Activated CD4-positive, alpha-beta T cell treated with anti-CD3 and anti-CD28 coated beads for 36 hours (primary cell): ENCODE measurements at regions of chr16 and their contacts with region 1.

Region 1: GRCh38 chr16:89700100-89700648 is 1.3 kb downstream of the SPATA2L start:
- DNase-seq: peak; percentile 99
- ATAC-seq: peak; percentile 21
- H3K4me3 Mint-ChIP-seq: peak overlapping the region; percentile 71
- H3K27ac Mint-ChIP-seq: peak overlapping the region; percentile 25
- H3K4me1 Mint-ChIP-seq: peaks cover 13% of the 10 kb centered on the region
- H3K27me3 Mint-ChIP-seq: no peaks in the 10 kb centered on the region

Region 2: DNA sequence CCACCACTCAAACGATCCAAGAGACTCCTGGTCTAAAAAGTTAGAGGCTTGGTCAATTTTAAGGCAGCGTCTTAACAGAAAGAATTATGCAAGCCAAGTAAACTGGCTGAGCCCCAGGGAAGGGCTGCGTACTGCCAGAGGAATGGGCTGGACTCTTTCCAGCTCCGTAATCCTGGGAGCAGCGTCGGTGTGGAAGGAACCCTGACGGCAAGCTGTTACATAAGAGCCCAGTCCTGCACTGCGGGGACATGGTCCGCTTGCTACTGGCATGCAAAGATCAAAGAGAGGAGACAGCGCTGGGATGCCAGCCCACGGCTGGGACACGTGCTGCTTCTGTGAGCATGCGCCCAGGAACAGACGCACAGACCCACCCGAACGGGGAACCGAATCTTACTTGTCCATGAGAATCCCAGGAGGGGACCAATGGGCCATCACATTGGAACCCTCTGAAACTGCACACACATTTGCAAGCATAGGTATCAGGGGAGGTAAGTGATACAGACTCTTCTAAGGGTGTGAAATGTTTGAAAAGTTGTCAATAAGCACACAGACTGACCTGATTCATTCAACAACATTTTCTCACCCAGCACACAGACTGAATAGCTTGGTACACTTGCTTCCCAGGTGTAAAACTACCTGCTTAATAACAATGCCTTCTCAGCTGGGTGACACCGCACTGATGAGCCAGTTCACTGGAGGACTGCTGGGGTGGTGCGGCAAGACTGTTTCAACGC is 304.9 kb before region 1 on chr16:
- CTCF ChIA-PET with region 1: no interaction called
- POLR2A ChIA-PET with region 1: no interaction called
- intact Hi-C with region 1: no loop called
- DNase-seq: no peak
- ATAC-seq: no peak
- H3K4me3 Mint-ChIP-seq: no peak overlapping the region
- H3K27ac Mint-ChIP-seq: no peak overlapping the region
- H3K4me1 Mint-ChIP-seq: peaks cover 57% of the 10 kb centered on the region
- H3K27me3 Mint-ChIP-seq: no peaks in the 10 kb centered on the region

Region 3: DNA sequence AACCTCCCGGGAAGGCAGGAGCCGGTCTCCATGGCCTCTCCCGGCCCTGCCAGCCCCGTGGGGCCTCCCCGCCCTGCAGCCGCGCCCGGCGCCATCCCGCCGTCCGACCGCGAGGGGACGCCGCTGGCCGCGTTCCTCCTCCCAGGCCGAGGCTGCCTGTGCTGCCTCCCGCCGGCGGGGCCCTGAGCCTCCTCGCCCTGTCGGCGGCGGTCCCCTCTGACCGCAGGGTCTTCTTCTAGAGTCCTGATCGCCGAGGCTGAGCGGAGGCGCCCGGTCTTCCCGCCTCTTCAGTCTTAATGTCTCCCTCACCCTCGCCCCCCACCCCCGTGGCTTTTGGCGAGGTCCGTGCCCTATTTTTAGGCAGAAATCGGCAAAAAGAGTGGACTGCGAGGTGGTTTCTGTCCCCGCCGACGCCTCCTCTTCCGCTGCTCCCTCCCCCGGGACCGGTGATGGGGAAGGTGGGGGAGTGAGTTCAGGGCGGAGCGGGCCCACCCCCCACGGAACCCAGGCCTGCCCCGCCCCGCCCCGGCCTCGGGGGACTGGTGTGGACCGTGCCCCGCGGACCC is 125.4 kb before region 1 on chr16:
- CTCF ChIA-PET with region 1: interaction called, 4 read pairs
- POLR2A ChIA-PET with region 1: no interaction called
- intact Hi-C with region 1: loop called in 1 of 2 experiments (anchors 1 kb)
- DNase-seq: peak; percentile 82
- ATAC-seq: peak; percentile 86
- H3K4me3 Mint-ChIP-seq: peak overlapping the region; percentile 39
- H3K27ac Mint-ChIP-seq: no peak overlapping the region
- H3K4me1 Mint-ChIP-seq: peaks cover 12% of the 10 kb centered on the region
- H3K27me3 Mint-ChIP-seq: peaks cover 3% of the 10 kb centered on the region

Region 4: GRCh38 chr16:89641458-89642119 is 58.6 kb before region 1 on chr16:
- CTCF ChIA-PET with region 1: no interaction called
- POLR2A ChIA-PET with region 1: no interaction called
- intact Hi-C with region 1: no loop called
- DNase-seq: no peak
- ATAC-seq: no peak
- H3K4me3 Mint-ChIP-seq: no peak overlapping the region
- H3K27ac Mint-ChIP-seq: no peak overlapping the region
- H3K4me1 Mint-ChIP-seq: peaks cover 11% of the 10 kb centered on the region
- H3K27me3 Mint-ChIP-seq: no peaks in the 10 kb centered on the region

Region 5: GRCh38 chr16:89711601-89712273 is 11.6 kb after region 1 on chr16:
- CTCF ChIA-PET with region 1: interaction called, 7 read pairs
- POLR2A ChIA-PET with region 1: interaction called, 6 read pairs
- intact Hi-C with region 1: loop called in 1 of 2 experiments (anchors 1 kb)
- DNase-seq: peak; percentile 92
- ATAC-seq: peak; percentile 89
- H3K4me3 Mint-ChIP-seq: peak overlapping the region; percentile 76
- H3K27ac Mint-ChIP-seq: no peak overlapping the region
- H3K4me1 Mint-ChIP-seq: peaks cover 8% of the 10 kb centered on the region
- H3K27me3 Mint-ChIP-seq: no peaks in the 10 kb centered on the region

Region 6: DNA sequence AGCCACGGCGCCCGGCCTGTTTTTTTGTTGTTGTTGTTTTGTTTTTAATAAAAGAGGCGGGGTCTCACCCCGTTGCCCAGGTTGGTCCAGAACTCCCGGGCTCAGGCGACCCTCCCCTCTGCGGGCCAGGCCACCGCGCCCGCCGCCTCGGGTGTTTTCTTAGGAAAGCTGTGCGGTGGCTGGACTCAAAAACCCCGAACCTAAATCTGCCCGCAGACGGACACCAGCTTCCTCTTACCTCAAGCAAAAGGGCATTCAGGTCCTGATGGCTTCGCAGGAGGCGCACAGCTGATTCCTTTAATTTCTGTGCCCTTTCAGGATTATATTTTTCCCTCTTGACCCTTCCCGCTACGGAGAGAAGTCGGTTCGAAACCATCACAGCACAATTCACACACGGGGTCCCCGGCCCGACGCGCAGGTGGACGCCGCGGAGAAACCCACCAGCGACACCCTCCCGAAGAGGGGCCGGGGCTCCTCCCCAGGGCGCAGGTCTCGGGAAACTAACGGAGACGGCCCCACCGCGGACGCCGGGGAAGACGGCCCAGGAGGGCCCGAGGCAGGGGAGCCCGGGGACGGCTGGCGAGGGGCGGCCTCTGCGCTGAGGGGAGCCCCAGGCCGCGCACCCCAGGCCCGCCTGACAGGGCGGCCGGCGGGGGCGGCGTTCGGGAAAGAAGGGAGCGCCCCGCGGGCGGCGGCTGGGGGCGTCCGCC is 115.6 kb after region 1 on chr16:
- CTCF ChIA-PET with region 1: no interaction called
- POLR2A ChIA-PET with region 1: no interaction called
- intact Hi-C with region 1: loop called in 1 of 2 experiments (anchors 1 kb)
- DNase-seq: peak; percentile 43
- ATAC-seq: peak; percentile 21
- H3K4me3 Mint-ChIP-seq: peak overlapping the region; percentile 89
- H3K27ac Mint-ChIP-seq: peak overlapping the region; percentile 67
- H3K4me1 Mint-ChIP-seq: peaks cover 44% of the 10 kb centered on the region
- H3K27me3 Mint-ChIP-seq: no peaks in the 10 kb centered on the region

Region 7: GRCh38 chr16:89917773-89918452 is 217.7 kb after region 1 on chr16:
- CTCF ChIA-PET with region 1: interaction called, 4 read pairs
- POLR2A ChIA-PET with region 1: no interaction called
- intact Hi-C with region 1: loop called in 1 of 2 experiments (anchors 2 kb)
- DNase-seq: peak; percentile 89
- ATAC-seq: peak; percentile 75
- H3K4me3 Mint-ChIP-seq: peak overlapping the region; percentile 50
- H3K27ac Mint-ChIP-seq: no peak overlapping the region
- H3K4me1 Mint-ChIP-seq: peaks cover 43% of the 10 kb centered on the region
- H3K27me3 Mint-ChIP-seq: peaks cover 25% of the 10 kb centered on the region

Region 8: GRCh38 chr16:90077226-90077756 is 377.1 kb after region 1 on chr16 and contains the start of gene PRDM7:
- CTCF ChIA-PET with region 1: no interaction called
- POLR2A ChIA-PET with region 1: no interaction called
- intact Hi-C with region 1: loop called in 1 of 2 experiments (anchors 1 kb)
- DNase-seq: peak; percentile 99
- ATAC-seq: peak; percentile 97
- H3K4me3 Mint-ChIP-seq: peak within 1 kb of the TSS; percentile 78
- H3K27ac Mint-ChIP-seq: peak within 1 kb of the TSS; percentile 82
- H3K4me1 Mint-ChIP-seq: peaks cover 28% of the 10 kb centered on the region
- H3K27me3 Mint-ChIP-seq: peaks cover 11% of the 10 kb centered on the region
- total RNA-seq, gene PRDM7: not detected